ENCODE measurements at regions of chr5 and their contacts with region 1.

Region 1: DNA sequence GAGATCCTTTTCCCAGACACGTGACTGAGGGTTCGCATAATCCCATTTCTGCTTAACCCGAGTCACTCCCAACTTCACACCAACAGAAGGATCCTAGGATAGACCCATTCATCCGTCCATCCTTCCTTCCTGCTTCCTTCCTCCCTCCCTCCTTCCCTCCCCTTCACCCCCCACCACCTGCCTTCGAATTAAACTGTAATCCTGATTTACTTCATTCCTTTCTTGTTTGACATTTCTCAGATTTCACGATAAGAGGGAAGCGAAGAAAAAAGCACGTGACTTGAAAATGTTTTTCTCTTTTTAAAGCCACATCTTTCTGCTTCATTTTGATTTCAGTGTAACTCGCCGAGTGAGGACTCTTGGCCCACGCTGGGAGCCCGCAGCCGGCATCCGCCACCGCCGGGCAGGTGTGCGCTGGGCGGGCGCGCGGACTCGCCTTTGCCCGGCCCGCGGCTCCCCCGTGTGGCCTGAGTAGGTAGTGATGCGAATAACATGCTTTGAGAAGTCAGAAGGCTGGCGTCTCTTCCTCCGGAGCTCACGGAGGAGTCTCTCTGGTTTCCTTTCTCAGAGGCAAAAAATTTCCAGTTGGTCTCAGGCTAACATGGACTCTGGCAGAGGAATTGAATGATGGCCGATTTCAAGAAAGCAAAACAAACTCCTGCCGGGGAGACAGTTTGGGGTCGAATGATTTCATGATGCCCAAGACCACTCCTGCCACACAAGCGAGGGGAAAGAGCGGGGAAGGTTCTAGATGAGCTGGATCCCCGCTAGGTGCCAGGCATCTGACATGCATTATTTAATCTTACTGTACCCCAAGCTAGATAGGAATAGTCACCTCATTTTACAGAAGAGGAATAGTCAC is 117.7 kb downstream of the SLC12A2 start:
- DNase-seq: peak; percentile 78 to 84
- H3K4me3 ChIP-seq: peak overlapping the region in 1 of 2 donors; percentile 24
- H3K27ac ChIP-seq: no peak overlapping the region
- H3K4me1 ChIP-seq: peaks cover 0 to 10% (median 7%) of the 10 kb centered on the region in 4 donors
- H3K27me3 ChIP-seq: peaks cover 0 to 4% of the 10 kb centered on the region in 2 donors
- CTCF ChIP-seq: peak; percentile 91

Region 2: DNA sequence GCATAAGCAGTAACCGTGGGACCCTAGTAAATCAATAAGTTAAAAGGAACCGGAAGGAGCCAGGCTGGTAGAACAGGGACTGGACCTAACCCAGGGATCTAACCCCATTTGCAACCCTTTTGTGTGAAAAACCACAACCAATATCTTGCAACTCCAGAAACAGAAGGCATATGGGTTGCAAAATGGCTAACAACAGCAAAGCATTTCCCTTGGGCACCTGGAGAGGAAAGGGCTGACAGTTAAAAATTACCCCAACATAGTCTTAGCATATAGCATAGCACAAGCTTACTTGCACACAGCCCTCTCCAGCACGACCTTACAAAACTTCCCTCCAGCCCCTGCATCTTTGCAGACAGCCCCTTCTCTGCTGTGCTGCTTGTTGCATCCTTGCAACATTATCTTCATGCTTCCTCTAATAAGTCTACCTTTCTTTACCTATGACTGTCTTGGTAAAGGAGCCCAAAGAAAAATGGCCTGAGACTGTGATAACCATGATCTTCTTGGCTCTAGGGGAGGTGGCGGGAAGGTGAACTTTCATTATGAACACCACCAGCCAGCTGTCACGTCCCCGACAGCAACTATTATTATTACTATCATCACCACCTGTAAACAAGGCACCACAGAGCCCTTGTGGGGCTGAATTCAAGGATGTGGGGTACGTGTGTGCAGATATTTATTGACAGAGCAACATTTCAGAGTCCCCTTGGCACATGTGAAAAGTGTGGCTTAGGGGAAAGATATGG is 634.1 kb before region 1 on chr5:
- intact Hi-C with region 1: loop called (anchors 5 kb)
- DNase-seq: no peak
- H3K4me3 ChIP-seq: no peak overlapping the region
- H3K27ac ChIP-seq: no peak overlapping the region
- H3K4me1 ChIP-seq: no peaks in the 10 kb centered on the region
- H3K27me3 ChIP-seq: no peaks in the 10 kb centered on the region
- CTCF ChIP-seq: no peak

Region 3: DNA sequence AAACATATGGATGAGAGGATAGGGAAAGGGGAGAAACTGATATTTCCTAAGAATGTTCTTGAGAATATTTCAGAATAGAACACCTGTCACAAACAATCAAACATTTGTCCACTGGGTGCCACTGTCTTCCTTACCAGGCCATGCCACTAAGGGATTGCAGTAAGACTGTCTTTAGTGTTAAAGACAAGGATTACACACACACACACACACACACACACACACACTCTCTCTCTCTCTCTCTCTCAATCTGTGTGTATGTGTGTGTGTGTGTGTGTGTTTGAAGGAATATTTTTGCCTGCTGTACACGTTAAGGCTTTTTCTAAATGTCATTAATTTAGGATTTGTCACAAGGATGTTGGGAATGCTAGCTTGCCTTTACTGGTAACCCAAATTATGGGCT is 443.7 kb before region 1 on chr5:
- intact Hi-C with region 1: loop called (anchors 5 kb)
- DNase-seq: no peak
- H3K4me3 ChIP-seq: no peak overlapping the region
- H3K27ac ChIP-seq: no peak overlapping the region
- H3K4me1 ChIP-seq: no peaks in the 10 kb centered on the region
- H3K27me3 ChIP-seq: no peaks in the 10 kb centered on the region
- CTCF ChIP-seq: peak; percentile 11 to 13